Activated CD8-positive, alpha-beta T cell treated with anti-CD3 and anti-CD28 coated beads for 36 hours (primary cell): ENCODE measurements at regions of chr5 and their contacts with region 1.

Region 1: DNA sequence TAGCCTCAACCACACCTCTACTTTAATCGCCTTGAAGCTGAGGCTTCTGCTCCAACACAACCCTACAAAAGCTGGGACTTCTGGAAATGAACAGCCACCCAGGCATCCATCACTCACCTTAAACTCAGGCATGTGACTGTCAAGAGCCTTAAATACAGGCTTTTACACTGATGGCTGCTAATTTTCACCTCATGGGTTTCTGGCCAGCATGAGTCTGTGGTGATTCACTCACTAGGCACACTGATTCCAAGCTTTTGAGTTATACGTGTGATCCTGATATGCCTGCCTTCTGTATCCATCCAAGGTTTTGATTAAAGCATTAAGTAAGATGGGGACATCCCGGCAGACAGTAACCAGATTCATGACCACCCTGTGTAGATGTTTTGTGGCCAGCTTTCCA is 8.9 kb downstream of the NSUN2 start:
- DNase-seq: no peak
- ATAC-seq: no peak
- H3K4me3 Mint-ChIP-seq: no peak overlapping the region
- H3K27ac Mint-ChIP-seq: no peak overlapping the region
- H3K4me1 Mint-ChIP-seq: peaks cover 35% of the 10 kb centered on the region
- H3K27me3 Mint-ChIP-seq: no peaks in the 10 kb centered on the region
- CTCF ChIP-seq: no peak

Region 2: DNA sequence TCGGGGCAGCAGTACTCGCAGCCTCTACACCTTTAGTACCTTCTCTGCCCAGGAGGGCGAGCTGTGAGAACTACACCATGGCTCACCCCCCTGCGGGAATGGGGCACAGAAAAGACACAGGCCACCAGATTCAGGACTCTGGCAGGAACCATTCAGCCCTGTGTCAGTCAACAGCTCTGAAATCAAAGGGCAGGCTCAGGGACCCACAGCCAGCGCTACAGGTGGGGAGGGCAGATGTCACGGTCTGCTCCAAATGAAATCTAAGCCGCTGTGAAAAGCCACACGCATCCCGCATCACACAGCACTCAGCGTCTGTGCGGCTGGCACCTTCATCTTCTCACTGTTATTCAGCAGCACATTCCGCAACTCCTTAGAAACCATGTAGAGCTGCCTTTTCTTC is 19.0 kb before region 1 on chr5:
- CTCF ChIA-PET with region 1: interaction called, 3 read pairs
- POLR2A ChIA-PET with region 1: interaction called, 12 read pairs
- intact Hi-C with region 1: no loop called
- DNase-seq: no peak
- ATAC-seq: no peak
- H3K4me3 Mint-ChIP-seq: no peak overlapping the region
- H3K27ac Mint-ChIP-seq: no peak overlapping the region
- H3K4me1 Mint-ChIP-seq: no peaks in the 10 kb centered on the region
- H3K27me3 Mint-ChIP-seq: no peaks in the 10 kb centered on the region
- CTCF ChIP-seq: no peak